PC-9 (cell line): ENCODE measurements at regions of chr7 and their contacts with region 1.

Region 1: DNA sequence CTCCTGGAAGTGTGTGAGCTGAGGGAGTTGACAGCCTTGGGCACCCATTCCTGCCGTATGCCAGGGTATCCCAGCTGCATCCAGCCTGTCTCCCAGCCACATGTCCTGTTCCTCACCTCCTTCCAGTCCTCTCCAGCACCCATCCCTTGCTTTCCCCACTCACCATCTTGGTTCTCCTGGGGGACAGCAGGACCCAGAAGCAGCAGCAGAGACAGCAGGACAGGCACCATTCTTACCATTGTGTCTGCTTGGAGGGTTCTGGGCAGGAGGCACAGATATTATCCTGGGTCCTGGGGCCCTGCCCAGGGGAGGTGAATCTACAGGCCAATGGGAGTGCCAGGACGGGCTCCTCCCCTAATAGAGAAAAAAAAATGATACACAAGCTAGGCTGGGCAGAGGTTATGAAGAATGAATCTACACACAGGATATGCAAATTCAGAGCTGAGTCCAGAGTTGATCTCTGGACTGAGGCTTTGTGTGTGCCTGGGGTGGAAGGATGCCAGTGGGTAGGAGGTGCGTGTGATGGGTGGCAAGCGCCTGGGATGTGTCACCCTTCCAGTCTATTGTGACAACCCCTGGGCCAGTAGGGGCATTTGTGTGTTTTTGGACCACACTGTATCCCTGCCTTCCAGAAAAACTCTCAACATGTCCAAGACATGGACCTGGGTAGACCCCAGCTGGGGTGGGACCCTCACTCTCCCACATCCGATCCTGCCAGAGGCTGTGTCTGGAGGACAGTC is at the start of gene AZGP1:
- DNase-seq: no peak
- H3K4me3 ChIP-seq: no peak within 1 kb of the TSS
- H3K27ac ChIP-seq: no peak within 1 kb of the TSS
- H3K4me1 ChIP-seq: no peaks in the 10 kb centered on the region
- H3K27me3 ChIP-seq: peaks cover 29% of the 10 kb centered on the region
- CTCF ChIP-seq: no peak
- total RNA-seq, gene AZGP1: 0.70 TPM in 1 of 2 replicates, not detected in the other

Region 2: GRCh38 chr7:99918959-99919813 is 56.8 kb before region 1 on chr7 and contains the start of gene TRIM4:
- CTCF ChIA-PET with region 1: no interaction called
- POLR2A ChIA-PET with region 1: interaction called, 11 read pairs
- intact Hi-C with region 1: no loop called
- DNase-seq: peak; percentile 79 to 91
- H3K4me3 ChIP-seq: peak within 1 kb of the TSS; percentile 97
- H3K27ac ChIP-seq: peak within 1 kb of the TSS; percentile 65
- H3K4me1 ChIP-seq: peaks cover 16% of the 10 kb centered on the region
- H3K27me3 ChIP-seq: no peaks in the 10 kb centered on the region
- CTCF ChIP-seq: no peak; the same call in 1 of the 2 replicates
- total RNA-seq, gene TRIM4: 34.0 and 35.8 TPM in 2 replicates

Region 3: GRCh38 chr7:99928994-99929729 is 46.8 kb before region 1 on chr7 and contains the start of gene GJC3:
- CTCF ChIA-PET with region 1: no interaction called
- POLR2A ChIA-PET with region 1: no interaction called
- intact Hi-C with region 1: loop called (anchors 5 kb)
- DNase-seq: peak; percentile 58 to 68
- H3K4me3 ChIP-seq: peak within 1 kb of the TSS; percentile 48; the same call in 1 of the 2 replicates
- H3K27ac ChIP-seq: no peak within 1 kb of the TSS
- H3K4me1 ChIP-seq: 0 out of 2 replicates have a peak, but pooled peaks cover 3% of the 10 kb centered on the region
- H3K27me3 ChIP-seq: peaks cover 63% of the 10 kb centered on the region
- CTCF ChIP-seq: peak; percentile 58
- total RNA-seq, gene GJC3: not detected in 2 replicates